Activated CD8-positive, alpha-beta memory T cell treated with anti-CD3 and anti-CD28 coated beads, Interleukin-2, amount 10 ng/mL, durations not matched to agents 7 days and 5 days (primary cell): ENCODE measurements at regions of chr2 and their contacts with region 1.

Region 1: GRCh38 chr2:191637182-191638078 is 40.5 kb upstream of the NABP1 start:
- DNase-seq: no peak
- ATAC-seq: peak; percentile 89
- H3K4me3 Mint-ChIP-seq: peak overlapping the region; percentile 11
- H3K27ac Mint-ChIP-seq: peak overlapping the region; percentile 80
- H3K4me1 Mint-ChIP-seq: peaks cover 51% of the 10 kb centered on the region
- H3K27me3 Mint-ChIP-seq: peaks cover 40% of the 10 kb centered on the region

Region 2: DNA sequence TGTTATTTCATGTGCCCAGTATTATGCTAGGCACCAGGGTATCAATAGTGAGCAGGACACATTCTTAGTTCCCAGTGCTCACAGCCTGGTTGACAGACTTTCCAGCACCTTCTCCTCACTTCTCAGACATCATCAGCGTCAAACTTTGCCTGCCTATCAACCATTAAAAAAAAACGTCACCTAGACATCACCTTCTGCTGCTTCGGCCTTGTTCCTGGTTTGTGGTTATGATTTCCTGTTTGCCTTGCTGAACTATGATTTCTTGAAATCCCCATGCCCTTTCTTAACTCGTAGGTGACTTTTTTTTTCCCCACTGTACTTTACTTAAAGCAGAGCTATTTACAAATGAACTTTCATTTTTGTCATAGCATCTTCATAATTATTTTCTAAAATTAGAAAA is 19.9 kb before region 1 on chr2:
- CTCF ChIA-PET with region 1: interaction called, 10 read pairs
- DNase-seq: peak; percentile 65
- ATAC-seq: peak; percentile 88
- H3K4me3 Mint-ChIP-seq: peak overlapping the region; percentile 13
- H3K27ac Mint-ChIP-seq: peak overlapping the region; percentile 79
- H3K4me1 Mint-ChIP-seq: peaks cover 20% of the 10 kb centered on the region
- H3K27me3 Mint-ChIP-seq: no peaks in the 10 kb centered on the region

Region 3: DNA sequence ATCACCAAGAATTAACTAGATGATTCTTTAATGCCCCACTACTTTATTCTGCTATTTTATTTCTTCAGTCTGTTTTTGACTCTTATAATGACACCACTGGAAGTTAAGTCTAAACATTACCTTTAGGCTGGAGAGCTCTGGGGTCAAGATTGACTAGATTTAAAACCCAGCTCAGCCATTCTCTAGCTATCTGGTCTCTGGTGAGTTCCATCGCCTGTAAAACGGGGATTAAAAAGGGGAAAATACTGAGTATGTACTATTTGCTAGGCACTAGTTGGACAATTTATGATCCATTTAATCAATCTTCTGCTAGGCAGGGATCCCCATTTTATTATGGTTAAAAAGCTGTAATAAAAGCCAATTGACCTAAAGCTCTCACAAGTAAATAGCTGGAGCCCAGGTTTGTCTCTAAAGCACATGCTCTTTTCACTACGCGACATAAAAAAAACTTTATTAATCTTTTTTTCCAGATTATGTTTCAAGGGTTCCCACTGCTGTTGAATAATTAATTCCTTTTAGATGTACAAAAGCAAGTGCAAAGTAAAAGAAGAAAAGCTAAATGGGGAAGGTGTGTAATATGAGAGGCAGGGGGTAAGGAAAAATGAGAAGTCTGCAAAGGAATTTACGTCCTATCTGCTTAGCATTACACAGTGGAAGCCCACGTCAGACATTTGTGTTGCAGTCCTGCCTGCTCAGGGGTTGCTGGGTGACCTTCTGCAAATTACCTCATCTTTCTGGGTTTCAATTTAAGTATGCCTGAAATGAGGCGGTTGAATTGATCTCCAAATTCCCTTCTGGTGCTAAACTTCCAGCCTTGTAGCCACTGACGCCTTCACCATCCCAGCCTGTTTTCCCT is 39.6 kb after region 1 on chr2:
- CTCF ChIA-PET with region 1: interaction called, 12 read pairs
- DNase-seq: peak; percentile 83
- ATAC-seq: peak; percentile 28
- H3K4me3 Mint-ChIP-seq: peak overlapping the region; percentile 100
- H3K27ac Mint-ChIP-seq: peak overlapping the region; percentile 100
- H3K4me1 Mint-ChIP-seq: peaks cover 41% of the 10 kb centered on the region
- H3K27me3 Mint-ChIP-seq: no peaks in the 10 kb centered on the region